ENCODE measurements at regions of chr22 and their contacts with region 1.

Region 1: GRCh38 chr22:37229805-37230672 is 14.0 kb downstream of the RAC2 start:
- DNase-seq: peak; percentile 85
- ATAC-seq: peak; percentile 87
- H3K4me3 ChIP-seq: peak overlapping the region; percentile 13 to 30 (median 18)
- H3K4me3 Mint-ChIP-seq: peak overlapping the region; percentile 86
- H3K27ac ChIP-seq: peak overlapping the region; percentile 91 to 96
- H3K27ac Mint-ChIP-seq: peak overlapping the region; percentile 100
- H3K4me1 ChIP-seq: peaks cover 85 to 95% of the 10 kb centered on the region in 2 donors
- H3K4me1 Mint-ChIP-seq: peaks cover 88% of the 10 kb centered on the region
- H3K27me3 ChIP-seq: no peaks in the 10 kb centered on the region
- H3K27me3 Mint-ChIP-seq: no peaks in the 10 kb centered on the region
- CTCF ChIP-seq: no peak

Region 2: DNA sequence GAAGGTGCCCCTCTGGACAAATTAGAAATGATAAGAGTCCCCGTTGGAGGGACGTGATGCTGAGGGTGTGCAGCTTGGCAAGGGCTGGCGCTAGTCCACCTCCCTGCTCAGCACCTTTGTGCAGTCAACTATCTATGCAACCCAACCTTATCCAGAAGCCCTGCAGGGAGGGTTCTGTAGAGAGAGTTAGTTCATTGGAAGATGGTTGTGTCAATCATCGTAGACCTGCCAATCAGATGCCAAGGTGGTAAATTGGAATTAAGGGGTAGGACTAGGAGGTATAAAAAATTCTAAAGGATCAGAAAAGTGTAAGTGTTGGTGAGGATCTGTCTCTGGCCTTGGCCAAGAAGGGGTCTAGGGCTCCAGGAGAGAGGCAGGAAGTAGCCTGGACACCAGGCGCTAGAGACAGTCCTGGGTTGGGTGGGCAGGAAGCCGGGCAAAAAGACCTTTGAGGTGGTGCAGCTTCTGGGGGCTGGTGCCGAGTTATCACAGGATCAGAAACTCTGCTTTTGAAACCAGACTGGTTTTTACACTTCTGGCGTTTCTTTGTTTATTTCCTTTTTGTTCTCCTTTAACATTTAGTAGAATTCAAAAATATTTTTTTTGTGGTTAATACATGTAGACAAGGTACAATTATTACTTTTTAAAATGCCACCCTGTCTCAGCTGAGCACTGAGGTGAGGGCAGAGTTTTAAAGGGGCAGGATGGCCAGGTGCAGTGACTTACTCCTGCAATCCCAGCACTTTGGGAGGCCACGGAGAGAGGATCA is 43.6 kb before region 1 on chr22:
- CTCF ChIA-PET with region 1: no interaction called
- POLR2A ChIA-PET with region 1: no interaction called
- intact Hi-C with region 1: no loop called
- DNase-seq: peak; percentile 75
- ATAC-seq: peak; percentile 24
- H3K4me3 ChIP-seq: no peak overlapping the region
- H3K4me3 Mint-ChIP-seq: no peak overlapping the region
- H3K27ac ChIP-seq: no peak overlapping the region
- H3K27ac Mint-ChIP-seq: no peak overlapping the region
- H3K4me1 ChIP-seq: peaks cover 0 to 14% of the 10 kb centered on the region in 2 donors
- H3K4me1 Mint-ChIP-seq: peaks cover 9% of the 10 kb centered on the region
- H3K27me3 ChIP-seq: peaks cover 0 to 3% (median 0%) of the 10 kb centered on the region in 4 experiments
- H3K27me3 Mint-ChIP-seq: no peaks in the 10 kb centered on the region
- CTCF ChIP-seq: no peak

Region 3: GRCh38 chr22:37218771-37219411 is 11.1 kb before region 1 on chr22:
- CTCF ChIA-PET with region 1: interaction called, 17 read pairs
- POLR2A ChIA-PET with region 1: interaction called, 21 read pairs
- intact Hi-C with region 1: loop called (anchors 1 kb)
- DNase-seq: peak; percentile 93
- ATAC-seq: peak; percentile 88
- H3K4me3 ChIP-seq: peak overlapping the region in 4 of 5 experiments; percentile 11 to 29 (median 22)
- H3K4me3 Mint-ChIP-seq: peak overlapping the region; percentile 69
- H3K27ac ChIP-seq: peak overlapping the region; percentile 87 to 93
- H3K27ac Mint-ChIP-seq: peak overlapping the region; percentile 94
- H3K4me1 ChIP-seq: peaks cover 65 to 74% of the 10 kb centered on the region in 2 donors
- H3K4me1 Mint-ChIP-seq: peaks cover 68% of the 10 kb centered on the region
- H3K27me3 ChIP-seq: no peaks in the 10 kb centered on the region
- H3K27me3 Mint-ChIP-seq: no peaks in the 10 kb centered on the region
- CTCF ChIP-seq: no peak